ENCODE measurements at regions of chr10 and their contacts with region 1.

Region 1: DNA sequence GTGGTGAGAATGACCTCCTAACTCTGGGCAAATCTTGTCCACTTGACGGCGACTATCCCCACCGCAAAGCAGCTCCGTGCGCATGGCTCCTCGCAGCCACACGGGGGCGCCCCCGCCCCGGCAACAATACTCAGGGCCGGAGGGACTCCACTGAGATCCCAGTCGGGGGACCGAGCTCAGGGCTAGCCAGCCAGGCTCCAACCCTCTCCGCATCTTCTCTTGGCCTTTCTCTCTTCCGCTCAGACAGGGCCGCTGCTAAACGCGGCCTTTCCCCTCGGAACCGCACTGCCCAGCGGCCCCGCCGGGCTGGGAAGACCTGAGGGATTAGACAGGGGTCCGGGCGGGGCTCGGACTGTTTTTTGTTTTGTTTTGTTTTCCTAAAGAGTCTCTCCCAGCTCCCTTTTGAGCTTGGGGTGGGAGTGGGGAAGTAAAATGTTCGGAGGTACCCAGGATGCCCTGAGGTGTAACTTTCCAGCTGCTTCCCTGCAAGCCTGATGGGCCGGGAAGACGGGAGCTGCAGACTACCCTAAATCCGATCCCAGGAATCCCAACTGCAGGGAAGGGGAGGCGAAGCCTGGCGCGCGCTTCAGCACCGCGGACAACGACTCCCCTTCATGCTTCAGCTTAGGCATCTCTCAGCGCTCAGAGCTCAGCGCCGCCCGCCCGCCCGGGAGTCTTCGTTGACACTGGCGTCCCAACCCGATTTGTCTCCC is 2.7 kb downstream of the KCNIP2 start:
- DNase-seq: peak; percentile 77 to 94 (median 88)

Region 2: GRCh38 chr10:101889256-101890210 is 48.6 kb after region 1 on chr10:
- intact Hi-C with region 1: loop called (anchors 5 kb)
- DNase-seq: peak; percentile 55 to 95 (median 87)

Region 3: DNA sequence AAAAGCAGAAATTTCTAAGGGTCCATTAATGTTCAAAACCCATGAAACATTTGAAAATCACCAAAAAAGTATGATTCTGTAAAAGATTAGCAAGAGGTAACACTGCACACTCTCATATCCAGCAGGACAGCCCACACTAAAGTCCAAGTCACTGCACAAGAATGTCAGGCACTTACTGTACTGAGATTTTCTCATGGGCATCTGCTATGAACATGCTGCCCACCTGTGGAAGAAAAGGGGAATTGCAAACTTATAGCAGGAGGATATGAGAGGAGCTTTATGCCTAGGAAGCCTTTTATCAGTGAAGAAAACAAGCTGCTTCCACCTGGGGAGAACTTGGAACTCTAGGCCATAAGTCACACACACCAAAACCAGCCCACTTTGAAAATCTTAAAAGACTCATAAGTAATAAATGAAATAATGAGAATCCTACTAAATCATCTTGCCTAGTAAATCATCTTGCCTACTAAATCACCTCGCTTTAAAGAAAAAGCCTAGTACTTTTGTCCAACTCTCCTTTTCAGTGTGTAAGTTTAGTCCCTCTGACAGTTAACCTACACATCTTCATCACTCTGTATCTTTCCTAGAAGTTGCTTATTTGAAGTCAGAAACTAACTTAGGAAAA is 169.0 kb after region 1 on chr10:
- intact Hi-C with region 1: loop called (anchors 2 kb)
- DNase-seq: peak in 32 of 42 donors; percentile 3 to 83 (median 56)

Region 4: GRCh38 chr10:102064868-102065560 is 224.1 kb after region 1 on chr10 and contains the start of gene HPS6:
- intact Hi-C with region 1: no loop called
- DNase-seq: peak; percentile 37 to 94 (median 87)

Measured in head of caudate nucleus (tissue), 42 donors.